ENCODE measurements at regions of chr5 and their contacts with region 1.

Region 1: DNA sequence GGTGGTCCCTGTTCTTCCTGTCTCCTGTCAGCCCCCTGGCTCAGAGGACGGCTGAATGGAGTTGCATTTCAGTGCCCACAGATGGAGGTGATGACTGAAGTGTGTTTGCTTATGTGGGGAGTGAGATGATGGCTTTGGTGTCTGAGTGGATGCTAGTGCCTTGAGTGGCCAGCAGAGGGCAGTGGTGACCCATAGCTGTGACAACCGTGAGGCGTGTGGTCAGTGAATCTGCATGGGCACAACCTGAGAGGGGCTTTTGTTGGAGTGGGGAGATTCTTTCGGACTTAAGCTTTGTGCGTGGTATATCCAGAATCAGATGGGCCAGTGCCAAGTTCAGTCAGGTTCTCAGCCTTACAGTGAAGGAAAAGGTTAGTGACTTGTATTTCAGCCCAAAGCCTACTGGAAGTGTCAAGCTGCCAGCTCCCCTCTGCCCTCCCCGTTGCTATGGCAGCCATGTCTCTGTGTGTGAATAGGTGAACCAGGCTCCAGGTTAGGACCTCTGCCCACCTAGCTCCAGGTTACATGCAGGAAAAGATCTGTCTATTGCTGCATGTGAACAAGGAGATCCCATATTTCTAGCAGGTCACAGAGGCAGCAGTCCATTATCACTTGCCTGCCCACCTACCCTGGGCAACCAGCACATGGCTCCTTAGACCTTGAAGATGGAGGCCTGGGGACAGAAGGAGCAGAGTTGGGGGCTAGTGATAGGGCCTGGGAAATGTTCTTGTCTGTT is 14.7 kb upstream of the CXXC5 start:
- DNase-seq: peak; percentile 63 to 96 (median 79)

Region 2: DNA sequence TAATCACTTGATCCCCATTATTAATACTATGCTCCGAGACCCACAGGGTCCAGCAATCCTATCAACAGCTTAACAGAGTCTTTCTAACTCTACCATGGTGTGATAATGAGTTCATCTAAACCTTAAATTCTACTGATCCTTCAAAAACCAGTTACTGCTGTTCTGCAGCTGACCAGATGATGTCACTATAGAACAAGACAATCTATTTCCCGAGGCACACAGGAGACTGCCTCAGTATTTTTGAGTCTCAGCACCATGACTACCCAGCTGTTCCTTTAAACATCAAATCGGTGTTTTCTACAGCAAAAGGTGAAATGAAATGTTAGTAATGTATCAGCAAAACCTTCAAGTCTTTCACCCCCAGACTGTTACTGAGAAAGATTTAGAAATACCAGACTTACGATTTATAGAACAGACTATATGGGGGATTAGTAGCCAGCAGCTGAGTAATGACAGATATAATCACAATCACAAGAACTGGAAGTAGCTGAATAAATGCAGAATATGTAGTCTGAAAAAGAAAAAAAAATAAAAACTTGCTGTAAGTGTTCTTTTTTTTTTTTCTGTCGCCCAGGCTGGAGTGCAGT is 211.1 kb before region 1 on chr5:
- intact Hi-C with region 1: loop called (anchors 5 kb)
- DNase-seq: no peak

Region 3: DNA sequence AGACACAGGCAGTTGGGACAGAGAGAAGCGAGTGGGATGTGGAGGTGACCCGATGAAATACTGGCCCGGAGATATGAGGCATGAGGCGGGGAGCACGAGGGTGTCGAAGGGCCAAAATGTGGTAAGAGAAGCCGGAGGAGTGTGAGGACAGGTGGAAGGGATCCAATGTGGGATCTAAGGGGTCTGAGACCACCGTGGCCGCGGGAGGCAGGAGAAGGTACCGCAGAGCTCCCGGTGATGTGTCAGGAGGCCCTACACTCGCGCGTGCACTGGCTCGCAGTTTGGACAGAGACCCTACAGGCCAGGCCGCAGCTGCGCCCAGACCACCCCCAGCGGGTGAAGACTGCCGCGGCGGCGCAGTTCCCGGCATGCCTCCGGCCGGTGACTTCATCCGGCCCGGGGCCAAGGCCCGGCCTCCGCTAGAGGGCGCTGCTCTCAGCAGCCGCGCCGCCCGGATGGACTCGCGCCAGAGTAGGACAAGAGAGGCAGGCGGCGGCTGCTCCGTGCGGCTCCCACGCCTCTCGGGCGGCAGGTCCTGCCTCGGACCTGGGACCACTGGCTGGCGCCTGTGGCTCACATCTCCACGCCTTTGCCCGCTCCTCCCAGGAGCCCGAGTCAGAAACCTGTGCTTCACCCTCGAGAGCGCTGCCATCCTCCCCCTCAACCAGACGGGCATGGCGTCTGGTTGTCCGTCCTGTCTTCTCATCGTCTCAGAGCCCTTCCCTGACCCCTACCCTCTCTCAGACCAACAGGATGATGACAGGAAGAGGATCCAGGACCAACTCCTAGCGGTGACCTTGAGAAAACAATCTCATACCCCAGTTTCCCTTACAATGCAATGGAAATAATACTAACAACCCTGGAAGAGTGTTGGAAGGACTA is 115.5 kb before region 1 on chr5:
- intact Hi-C with region 1: loop called (anchors 10 kb)
- DNase-seq: peak; percentile 84 to 99 (median 92)

Region 4: GRCh38 chr5:139648205-139649081 is 15.0 kb after region 1 on chr5 and contains the start of gene CXXC5:
- intact Hi-C with region 1: loop called (anchors 1 kb)
- DNase-seq: peak; percentile 83 to 98 (median 88)

Region 5: GRCh38 chr5:139690064-139690802 is 56.8 kb after region 1 on chr5:
- intact Hi-C with region 1: loop called (anchors 1 kb)
- DNase-seq: peak in 1 of 10 donors; percentile 89

Region 6: GRCh38 chr5:139765409-139766217 is 132.2 kb after region 1 on chr5:
- intact Hi-C with region 1: loop called (anchors 1 kb)
- DNase-seq: peak; percentile 63 to 96 (median 79)

Region 7: GRCh38 chr5:139844472-139845145 is 211.1 kb after region 1 on chr5:
- intact Hi-C with region 1: no loop called
- DNase-seq: peak; percentile 65 to 96 (median 86)

Measured in posterior cingulate gyrus (tissue), 11 donors.